ENCODE measurements at regions of chr5 and their contacts with region 1.

Region 1: GRCh38 chr5:93899026-93899600 is 157.7 kb upstream of the POU5F2 start:
- DNase-seq: peak in 1 of 2 experiments; percentile 38
- H3K4me3 ChIP-seq: no peak overlapping the region
- H3K4me3 Mint-ChIP-seq: no peak overlapping the region
- H3K27ac Mint-ChIP-seq: no peak overlapping the region
- H3K4me1 ChIP-seq: no peaks in the 10 kb centered on the region
- H3K4me1 Mint-ChIP-seq: peaks cover 7% of the 10 kb centered on the region
- H3K27me3 ChIP-seq: no peaks in the 10 kb centered on the region
- H3K27me3 Mint-ChIP-seq: no peaks in the 10 kb centered on the region
- CTCF ChIP-seq: peak; percentile 31 to 56

Region 2: DNA sequence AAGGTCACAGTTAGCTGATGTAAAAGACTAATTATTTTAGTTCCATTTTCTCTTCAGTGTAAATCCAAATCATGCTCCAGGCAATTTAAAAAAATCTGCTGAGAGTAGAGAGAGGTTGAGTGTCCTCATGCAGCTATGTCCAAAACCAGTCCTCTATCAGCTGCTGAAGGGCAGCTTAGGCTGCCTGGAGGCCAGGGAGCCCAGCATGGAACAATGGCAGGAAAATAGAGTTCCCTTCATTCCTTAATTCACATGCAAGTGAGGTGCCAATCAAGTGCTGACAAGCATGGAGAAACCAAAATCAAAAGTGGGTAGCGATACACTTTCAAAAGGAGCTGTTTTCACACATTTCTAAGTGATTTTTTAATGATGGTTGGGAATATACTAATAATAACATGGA is 79.4 kb before region 1 on chr5:
- CTCF ChIA-PET with region 1: no interaction called
- POLR2A ChIA-PET with region 1: no interaction called
- intact Hi-C with region 1: no loop called
- DNase-seq: no peak
- H3K4me3 ChIP-seq: no peak overlapping the region
- H3K4me3 Mint-ChIP-seq: no peak overlapping the region
- H3K27ac Mint-ChIP-seq: no peak overlapping the region
- H3K4me1 ChIP-seq: no peaks in the 10 kb centered on the region
- H3K4me1 Mint-ChIP-seq: no peaks in the 10 kb centered on the region
- H3K27me3 ChIP-seq: no peaks in the 10 kb centered on the region
- H3K27me3 Mint-ChIP-seq: no peaks in the 10 kb centered on the region
- CTCF ChIP-seq: no peak

Region 3: GRCh38 chr5:93845376-93845775 is 53.7 kb before region 1 on chr5:
- CTCF ChIA-PET with region 1: no interaction called
- POLR2A ChIA-PET with region 1: no interaction called
- intact Hi-C with region 1: loop called (anchors 5 kb)
- DNase-seq: no peak
- H3K4me3 ChIP-seq: no peak overlapping the region
- H3K4me3 Mint-ChIP-seq: no peak overlapping the region
- H3K27ac Mint-ChIP-seq: no peak overlapping the region
- H3K4me1 ChIP-seq: peaks cover 9% of the 10 kb centered on the region; the same call in 1 of the 2 replicates
- H3K4me1 Mint-ChIP-seq: peaks cover 7% of the 10 kb centered on the region
- H3K27me3 ChIP-seq: no peaks in the 10 kb centered on the region
- H3K27me3 Mint-ChIP-seq: no peaks in the 10 kb centered on the region
- CTCF ChIP-seq: no peak

Measured in Caco-2 (cell line).